PC-9 (cell line): ENCODE measurements at regions of chr19 and their contacts with region 1.

Region 1: GRCh38 chr19:46704379-46705076 is 12.4 kb downstream of the PRKD2 start:
- DNase-seq: peak; percentile 34 to 70
- H3K4me3 ChIP-seq: no peak overlapping the region
- H3K27ac ChIP-seq: no peak overlapping the region
- H3K4me1 ChIP-seq: no peaks in the 10 kb centered on the region
- H3K27me3 ChIP-seq: no peaks in the 10 kb centered on the region
- CTCF ChIP-seq: peak; percentile 98

Region 2: GRCh38 chr19:46555628-46556280 is 148.8 kb before region 1 on chr19:
- CTCF ChIA-PET with region 1: no interaction called
- POLR2A ChIA-PET with region 1: no interaction called
- intact Hi-C with region 1: no loop called
- DNase-seq: no peak
- H3K4me3 ChIP-seq: no peak overlapping the region
- H3K27ac ChIP-seq: no peak overlapping the region
- H3K4me1 ChIP-seq: no peaks in the 10 kb centered on the region
- H3K27me3 ChIP-seq: no peaks in the 10 kb centered on the region
- CTCF ChIP-seq: no peak

Region 3: GRCh38 chr19:46730953-46731501 is 26.5 kb after region 1 on chr19:
- CTCF ChIA-PET with region 1: interaction called, 6 read pairs
- POLR2A ChIA-PET with region 1: interaction called, 3 read pairs
- intact Hi-C with region 1: loop called (anchors 1 kb)
- DNase-seq: peak; percentile 92 to 96
- H3K4me3 ChIP-seq: peak overlapping the region; percentile 2; the same call in 1 of the 2 replicates
- H3K27ac ChIP-seq: peak overlapping the region; percentile 83
- H3K4me1 ChIP-seq: peaks cover 54% of the 10 kb centered on the region
- H3K27me3 ChIP-seq: no peaks in the 10 kb centered on the region
- CTCF ChIP-seq: no peak

Region 4: GRCh38 chr19:46975925-46976782 is 271.6 kb after region 1 on chr19:
- CTCF ChIA-PET with region 1: no interaction called
- POLR2A ChIA-PET with region 1: interaction called, 24 read pairs
- intact Hi-C with region 1: no loop called
- DNase-seq: peak; percentile 79 to 85
- H3K4me3 ChIP-seq: no peak overlapping the region
- H3K27ac ChIP-seq: peak overlapping the region; percentile 45
- H3K4me1 ChIP-seq: peaks cover 30% of the 10 kb centered on the region
- H3K27me3 ChIP-seq: no peaks in the 10 kb centered on the region
- CTCF ChIP-seq: no peak